ENCODE measurements at regions of chr2 and their contacts with region 1.

Region 1: DNA sequence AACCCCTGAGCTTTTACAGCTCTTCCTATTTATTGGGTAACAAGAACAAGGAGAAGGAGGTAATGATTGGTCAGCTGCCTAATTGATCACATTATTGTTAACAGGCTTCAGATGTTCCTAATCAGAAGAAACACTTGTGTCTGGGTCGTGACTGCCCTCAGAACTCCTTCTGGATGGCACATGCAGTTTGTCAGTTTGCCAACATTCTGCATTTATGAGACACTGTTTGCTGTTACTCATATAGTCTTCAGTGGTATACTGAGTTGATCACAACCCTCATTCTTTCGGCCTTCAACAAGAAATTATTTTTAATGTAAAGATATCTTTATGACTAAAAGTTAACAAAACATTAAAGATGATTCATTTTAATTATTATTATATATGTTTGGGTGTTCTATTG is 95.7 kb upstream of the DOCK10 start:
- DNase-seq: no peak
- H3K4me3 ChIP-seq: no peak overlapping the region
- H3K27ac ChIP-seq: no peak overlapping the region
- H3K4me1 ChIP-seq: no peaks in the 10 kb centered on the region
- H3K27me3 ChIP-seq: no peaks in the 10 kb centered on the region
- CTCF ChIP-seq: no peak
- POLR2A ChIP-seq: no peak

Region 2: GRCh38 chr2:225156853-225157451 is 19.0 kb after region 1 on chr2:
- intact Hi-C with region 1: loop called (anchors 2 kb)
- DNase-seq: no peak
- H3K4me3 ChIP-seq: no peak overlapping the region
- H3K27ac ChIP-seq: no peak overlapping the region
- H3K4me1 ChIP-seq: no peaks in the 10 kb centered on the region
- H3K27me3 ChIP-seq: no peaks in the 10 kb centered on the region
- CTCF ChIP-seq: no peak
- POLR2A ChIP-seq: no peak

Measured in uterus (tissue), 4 donors.